IMR-90 (cell line): ENCODE measurements at regions of chr1 and their contacts with region 1.

Region 1: DNA sequence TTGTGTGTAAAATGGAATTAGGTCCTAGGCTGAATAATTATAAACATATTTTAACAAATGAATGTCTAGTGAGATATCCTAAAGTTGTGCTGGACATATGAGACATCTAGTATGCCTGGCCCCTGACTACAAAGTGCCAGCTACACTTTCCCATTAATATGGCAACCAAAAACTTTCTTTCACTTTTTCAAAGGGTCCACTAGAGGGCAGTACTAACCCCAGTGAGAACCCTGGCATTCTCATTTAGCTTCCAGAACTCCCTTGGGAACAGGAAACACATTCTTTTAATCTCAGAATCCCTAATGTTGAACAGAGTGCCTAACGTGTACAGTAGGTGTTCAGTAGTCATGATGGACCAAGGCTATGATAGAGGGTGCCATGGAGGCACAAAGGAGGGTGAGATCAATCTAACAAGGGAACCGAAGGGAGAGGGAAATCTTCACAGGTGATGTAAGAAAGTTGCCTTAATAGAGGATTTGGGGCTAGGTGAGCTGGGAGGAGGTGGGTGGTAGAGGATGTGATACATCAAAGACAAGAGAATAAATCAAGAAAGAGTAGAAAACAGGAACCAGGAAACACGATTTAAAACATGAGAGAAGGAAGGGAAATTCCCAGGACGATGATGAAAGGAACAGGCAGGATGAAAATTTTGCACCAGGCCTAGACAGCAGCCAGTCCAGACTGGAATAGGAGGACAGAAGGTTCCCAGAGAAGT is 41.6 kb downstream of the NSL1 start:
- DNase-seq: peak; percentile 79
- ATAC-seq: peak; percentile 85
- H3K4me3 ChIP-seq: no peak overlapping the region
- H3K27ac ChIP-seq: peak overlapping the region; percentile 78; the same call in 1 of the 2 replicates
- H3K4me1 ChIP-seq: peaks cover 8% of the 10 kb centered on the region
- H3K27me3 ChIP-seq: no peaks in the 10 kb centered on the region
- CTCF ChIP-seq: peak; percentile 73
- POLR2A ChIP-seq: no peak
- RAD21 ChIP-seq: peak; percentile 60

Region 2: DNA sequence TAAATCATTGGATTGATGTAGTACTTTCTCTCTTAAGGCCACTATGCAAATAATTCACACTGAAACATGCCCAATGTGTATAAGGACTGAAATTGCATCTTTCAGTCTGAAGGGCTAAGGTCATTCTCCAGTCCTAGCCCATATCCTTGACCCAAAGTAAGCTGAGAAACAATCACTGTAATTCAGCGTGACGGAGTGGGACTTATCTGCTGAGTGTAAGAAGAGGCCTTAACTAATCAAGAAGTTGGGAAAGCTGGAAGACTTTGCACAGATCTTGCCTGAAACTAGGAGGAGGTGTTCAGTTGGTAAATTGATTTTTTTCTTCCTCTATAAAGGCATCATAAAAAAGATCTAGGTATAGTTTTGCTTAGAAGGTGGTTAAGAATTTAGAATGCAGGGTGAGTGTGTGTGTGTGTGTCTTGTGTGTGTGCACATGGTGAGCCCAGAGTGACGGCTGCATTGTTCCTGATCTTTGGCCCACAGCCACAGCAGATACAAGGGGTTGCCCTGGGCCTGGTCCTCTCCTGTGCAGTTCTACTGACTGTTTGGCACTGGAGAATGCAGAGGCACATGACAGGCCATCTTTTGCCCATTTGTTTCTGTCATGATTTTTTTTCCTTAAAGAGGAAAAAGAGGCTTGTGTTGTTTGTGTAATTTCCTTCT is 478.0 kb before region 1 on chr1:
- CTCF ChIA-PET with region 1: no interaction called
- POLR2A ChIA-PET with region 1: no interaction called
- dilution Hi-C with region 1: no loop called
- in situ Hi-C with region 1: no loop called
- intact Hi-C with region 1: no loop called
- DNase-seq: no peak
- ATAC-seq: no peak
- H3K4me3 ChIP-seq: no peak overlapping the region
- H3K27ac ChIP-seq: peak overlapping the region; percentile 41; the same call in 1 of the 2 replicates
- H3K4me1 ChIP-seq: peaks cover 3% of the 10 kb centered on the region; the same call in 1 of the 2 replicates
- H3K27me3 ChIP-seq: peaks cover 10% of the 10 kb centered on the region; the same call in 1 of the 2 replicates
- CTCF ChIP-seq: no peak
- POLR2A ChIP-seq: no peak
- RAD21 ChIP-seq: no peak

Region 3: DNA sequence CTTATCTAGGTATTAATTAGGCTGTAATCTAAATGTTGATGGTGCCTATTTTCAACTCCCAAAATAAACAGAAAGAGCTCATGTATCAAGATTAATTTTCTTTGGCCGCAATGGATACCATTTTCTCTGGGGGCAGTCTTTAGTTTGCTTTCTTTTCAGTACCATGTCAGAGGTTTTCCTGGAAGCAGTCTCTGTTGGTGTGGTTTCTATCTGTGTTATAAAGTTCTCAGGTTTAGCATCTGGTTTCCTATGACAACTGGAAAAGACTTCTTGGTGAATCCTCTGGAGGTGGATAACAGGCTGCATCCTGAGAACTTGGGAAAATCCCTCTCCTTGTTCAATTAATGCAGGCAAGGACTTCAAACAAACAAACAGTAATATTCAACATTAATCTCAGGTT is 11.6 kb before region 1 on chr1:
- CTCF ChIA-PET with region 1: interaction called, 13 read pairs
- POLR2A ChIA-PET with region 1: interaction called, 3 read pairs
- dilution Hi-C with region 1: no loop called
- in situ Hi-C with region 1: no loop called
- intact Hi-C with region 1: no loop called
- DNase-seq: peak; percentile 69
- ATAC-seq: no peak
- H3K4me3 ChIP-seq: no peak overlapping the region
- H3K27ac ChIP-seq: no peak overlapping the region
- H3K4me1 ChIP-seq: no peaks in the 10 kb centered on the region
- H3K27me3 ChIP-seq: no peaks in the 10 kb centered on the region
- CTCF ChIP-seq: no peak
- POLR2A ChIP-seq: no peak
- RAD21 ChIP-seq: no peak